H1 (cell line): ENCODE measurements at regions of chr1 and their contacts with region 1.

Region 1: GRCh38 chr1:201655243-201655642 is 116.3 kb downstream of the NAV1 start:
- DNase-seq: no peak
- H3K4me3 ChIP-seq: no peak overlapping the region
- H3K27ac ChIP-seq: no peak overlapping the region
- H3K4me1 ChIP-seq: peaks cover 9 to 27% (median 19%) of the 10 kb centered on the region in 4 experiments
- H3K27me3 ChIP-seq: peaks cover 0 to 5% (median 0%) of the 10 kb centered on the region in 4 experiments; a peak in 1 of 7 replicates
- CTCF ChIP-seq: peak; percentile 46 to 49 (median 48)
- EP300 ChIP-seq: no peak
- POLR2A ChIP-seq: no peak
- RAD21 ChIP-seq: peak; percentile 10 to 43; a peak in 3 of 4 replicates

Region 2: GRCh38 chr1:201676197-201676596 is 21.0 kb after region 1 on chr1:
- CTCF ChIA-PET with region 1: interaction called, 19 read pairs
- POLR2A ChIA-PET with region 1: interaction called, 9 read pairs
- DNase-seq: no peak
- H3K4me3 ChIP-seq: no peak overlapping the region
- H3K27ac ChIP-seq: peak overlapping the region; percentile 64; the same call in 1 of the 2 replicates
- H3K4me1 ChIP-seq: peaks cover 7 to 35% (median 24%) of the 10 kb centered on the region in 4 experiments
- H3K27me3 ChIP-seq: no peaks in the 10 kb centered on the region
- CTCF ChIP-seq: no peak
- EP300 ChIP-seq: no peak
- POLR2A ChIP-seq: no peak
- RAD21 ChIP-seq: no peak